Naive thymus-derived CD4-positive, alpha-beta T cell (primary cell): ENCODE measurements at regions of chr10 and their contacts with region 1.

Region 1: DNA sequence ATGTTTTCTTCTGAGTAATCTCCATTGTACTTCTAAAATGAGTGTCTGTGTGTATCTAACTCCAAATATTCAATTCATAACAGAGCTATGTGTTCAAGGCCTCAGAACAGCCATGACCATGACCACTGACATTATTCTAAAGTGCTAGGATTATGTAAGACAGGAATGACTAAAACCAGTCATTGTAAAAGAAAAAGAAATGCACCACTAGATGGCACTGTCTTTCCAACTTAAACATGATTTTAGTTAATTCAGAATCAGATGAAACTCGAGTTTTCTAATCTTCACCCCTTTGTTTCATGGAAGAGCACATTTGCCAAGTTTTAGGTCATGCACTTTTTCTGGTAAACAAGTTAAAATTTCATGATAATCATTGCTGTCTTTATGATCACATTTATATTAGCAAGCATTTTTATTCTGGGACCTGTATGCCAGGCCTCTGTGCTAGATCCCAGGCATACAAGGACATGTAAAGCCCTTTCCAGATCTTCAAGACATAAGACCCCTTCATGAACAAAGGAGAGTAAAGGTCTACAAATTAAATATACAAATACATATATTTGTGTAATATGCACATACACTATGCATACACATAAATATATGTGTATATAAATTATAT is 26.1 kb upstream of the RSU1 start:
- DNase-seq: peak in 7 of 9 donors; percentile 44 to 71 (median 63)
- ATAC-seq: peak; percentile 86
- H3K4me3 ChIP-seq: no peak overlapping the region
- H3K4me3 Mint-ChIP-seq: no peak overlapping the region
- H3K27ac ChIP-seq: no peak overlapping the region
- H3K27ac Mint-ChIP-seq: peak overlapping the region in 5 of 9 donors; percentile 18 to 43 (median 34)
- H3K4me1 ChIP-seq: no peaks in the 10 kb centered on the region
- H3K4me1 Mint-ChIP-seq: peaks cover 0 to 9% (median 3%) of the 10 kb centered on the region in 7 donors
- H3K27me3 ChIP-seq: no peaks in the 10 kb centered on the region
- H3K27me3 Mint-ChIP-seq: peaks cover 0 to 2% (median 0%) of the 10 kb centered on the region in 5 donors

Region 2: DNA sequence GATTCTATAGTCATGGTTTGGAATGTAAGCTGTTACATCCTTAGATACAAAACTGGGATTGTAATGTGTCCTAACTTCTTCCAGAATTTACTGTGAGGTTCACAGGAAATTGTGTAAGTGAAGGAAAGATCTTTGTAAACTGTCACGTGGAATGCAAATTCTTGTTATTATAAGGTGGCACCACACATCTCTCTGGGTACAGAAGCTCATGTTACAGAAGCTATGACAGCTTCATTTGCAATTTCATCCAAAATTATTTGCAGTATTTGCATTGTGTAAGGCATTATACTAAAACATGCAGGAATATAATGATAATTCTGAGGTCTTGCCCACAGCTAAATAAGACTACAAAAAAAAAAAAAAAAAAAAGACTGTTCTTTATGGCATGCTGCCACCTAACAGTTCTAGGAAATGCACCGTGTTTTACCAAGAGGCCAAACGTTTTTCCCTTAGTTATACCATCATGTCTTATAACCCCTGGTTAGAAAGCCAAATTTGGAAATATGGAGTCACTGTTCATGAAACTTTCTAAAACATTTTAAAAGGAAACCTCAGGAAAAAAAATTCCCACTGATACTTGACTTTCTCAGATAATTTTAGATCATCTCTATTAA is 1000.7 kb before region 1 on chr10:
- CTCF ChIA-PET with region 1: no interaction called
- POLR2A ChIA-PET with region 1: no interaction called
- intact Hi-C with region 1: no loop called
- DNase-seq: no peak
- ATAC-seq: no peak
- H3K4me3 ChIP-seq: no peak overlapping the region
- H3K4me3 Mint-ChIP-seq: no peak overlapping the region
- H3K27ac ChIP-seq: no peak overlapping the region
- H3K27ac Mint-ChIP-seq: peak overlapping the region in 1 of 9 donors; percentile 19
- H3K4me1 ChIP-seq: no peaks in the 10 kb centered on the region
- H3K4me1 Mint-ChIP-seq: peaks cover 11 to 34% (median 30%) of the 10 kb centered on the region in 7 donors
- H3K27me3 ChIP-seq: no peaks in the 10 kb centered on the region
- H3K27me3 Mint-ChIP-seq: no peaks in the 10 kb centered on the region

Region 3: GRCh38 chr10:15879058-15879457 is 964.3 kb before region 1 on chr10:
- CTCF ChIA-PET with region 1: no interaction called
- POLR2A ChIA-PET with region 1: no interaction called
- intact Hi-C with region 1: loop called in 1 of 2 experiments (anchors 1 kb)
- DNase-seq: peak in 5 of 9 donors; percentile 14 to 38 (median 34)
- ATAC-seq: peak; percentile 44
- H3K4me3 ChIP-seq: no peak overlapping the region
- H3K4me3 Mint-ChIP-seq: no peak overlapping the region
- H3K27ac ChIP-seq: no peak overlapping the region
- H3K27ac Mint-ChIP-seq: no peak overlapping the region
- H3K4me1 ChIP-seq: no peaks in the 10 kb centered on the region
- H3K4me1 Mint-ChIP-seq: no peaks in the 10 kb centered on the region
- H3K27me3 ChIP-seq: no peaks in the 10 kb centered on the region
- H3K27me3 Mint-ChIP-seq: peaks cover 42 to 72% (median 54%) of the 10 kb centered on the region in 5 donors

Region 4: GRCh38 chr10:16384023-16384422 is 459.3 kb before region 1 on chr10:
- CTCF ChIA-PET with region 1: no interaction called
- POLR2A ChIA-PET with region 1: no interaction called
- intact Hi-C with region 1: no loop called
- DNase-seq: no peak
- ATAC-seq: no peak
- H3K4me3 ChIP-seq: no peak overlapping the region
- H3K4me3 Mint-ChIP-seq: no peak overlapping the region
- H3K27ac ChIP-seq: no peak overlapping the region
- H3K27ac Mint-ChIP-seq: no peak overlapping the region
- H3K4me1 ChIP-seq: no peaks in the 10 kb centered on the region
- H3K4me1 Mint-ChIP-seq: no peaks in the 10 kb centered on the region
- H3K27me3 ChIP-seq: no peaks in the 10 kb centered on the region
- H3K27me3 Mint-ChIP-seq: peaks cover 0 to 5% (median 0%) of the 10 kb centered on the region in 5 donors

Region 5: GRCh38 chr10:16891375-16892313 is 48.3 kb after region 1 on chr10:
- CTCF ChIA-PET with region 1: no interaction called
- POLR2A ChIA-PET with region 1: no interaction called
- intact Hi-C with region 1: loop called in 1 of 2 experiments (anchors 5 kb)
- DNase-seq: peak in 3 of 9 donors; percentile 7 to 18 (median 15)
- ATAC-seq: peak; percentile 69
- H3K4me3 ChIP-seq: no peak overlapping the region
- H3K4me3 Mint-ChIP-seq: peak overlapping the region; percentile 35 to 81 (median 58)
- H3K27ac ChIP-seq: no peak overlapping the region
- H3K27ac Mint-ChIP-seq: peak overlapping the region in 2 of 9 donors; percentile 40 to 49
- H3K4me1 ChIP-seq: no peaks in the 10 kb centered on the region
- H3K4me1 Mint-ChIP-seq: peaks cover 5 to 9% (median 5%) of the 10 kb centered on the region in 7 donors
- H3K27me3 ChIP-seq: no peaks in the 10 kb centered on the region
- H3K27me3 Mint-ChIP-seq: peaks cover 0 to 42% (median 0%) of the 10 kb centered on the region in 5 donors

Region 6: DNA sequence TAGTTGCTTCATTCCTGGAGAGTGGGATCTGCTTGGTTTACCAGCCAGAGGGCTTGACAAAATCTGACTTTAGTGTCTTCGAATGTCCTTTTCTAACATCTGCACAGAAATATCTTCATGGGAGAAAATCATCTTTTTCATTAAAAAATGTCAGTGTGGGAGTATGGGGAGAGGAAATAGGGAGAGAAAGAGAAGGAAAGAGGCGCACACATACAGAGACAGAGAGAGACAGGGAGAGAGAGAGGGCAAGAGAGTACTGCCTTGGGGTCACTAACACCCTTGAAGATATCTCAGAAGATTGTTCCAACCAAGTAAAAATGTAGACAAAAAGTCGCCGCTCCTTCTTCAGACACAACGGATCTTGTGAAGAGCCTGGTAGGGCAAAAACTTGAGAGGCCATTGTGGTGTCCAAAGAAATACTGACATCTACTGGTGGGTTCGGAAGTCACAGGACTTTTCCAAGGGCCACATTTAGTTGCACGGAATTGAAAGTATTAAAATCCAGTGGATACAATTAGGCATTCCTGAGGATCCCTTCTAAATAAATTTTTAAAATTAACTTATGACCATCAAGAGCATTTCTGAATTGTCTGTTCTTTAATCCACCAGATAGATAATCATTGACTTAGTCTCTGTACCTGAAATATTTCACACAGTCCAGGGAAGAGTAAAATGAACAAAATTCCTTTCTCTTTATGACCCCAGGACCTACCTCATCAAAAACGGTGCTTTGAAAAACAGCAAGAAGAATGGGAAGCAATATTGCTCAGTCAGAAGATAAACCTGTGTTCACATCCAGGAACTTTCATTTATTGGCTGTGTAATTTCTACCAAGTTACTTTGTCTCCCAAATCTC is 414.3 kb after region 1 on chr10:
- CTCF ChIA-PET with region 1: interaction called, 17 read pairs
- POLR2A ChIA-PET with region 1: no interaction called
- intact Hi-C with region 1: loop called (anchors 1 kb)
- DNase-seq: peak in 8 of 9 donors; percentile 15 to 71 (median 58)
- ATAC-seq: peak; percentile 88
- H3K4me3 ChIP-seq: no peak overlapping the region
- H3K4me3 Mint-ChIP-seq: peak overlapping the region in 3 of 10 donors; percentile 39 to 55 (median 51)
- H3K27ac ChIP-seq: no peak overlapping the region
- H3K27ac Mint-ChIP-seq: peak overlapping the region in 1 of 9 donors; percentile 38
- H3K4me1 ChIP-seq: no peaks in the 10 kb centered on the region
- H3K4me1 Mint-ChIP-seq: peaks cover 5 to 13% (median 6%) of the 10 kb centered on the region in 7 donors
- H3K27me3 ChIP-seq: no peaks in the 10 kb centered on the region
- H3K27me3 Mint-ChIP-seq: no peaks in the 10 kb centered on the region

Region 7: DNA sequence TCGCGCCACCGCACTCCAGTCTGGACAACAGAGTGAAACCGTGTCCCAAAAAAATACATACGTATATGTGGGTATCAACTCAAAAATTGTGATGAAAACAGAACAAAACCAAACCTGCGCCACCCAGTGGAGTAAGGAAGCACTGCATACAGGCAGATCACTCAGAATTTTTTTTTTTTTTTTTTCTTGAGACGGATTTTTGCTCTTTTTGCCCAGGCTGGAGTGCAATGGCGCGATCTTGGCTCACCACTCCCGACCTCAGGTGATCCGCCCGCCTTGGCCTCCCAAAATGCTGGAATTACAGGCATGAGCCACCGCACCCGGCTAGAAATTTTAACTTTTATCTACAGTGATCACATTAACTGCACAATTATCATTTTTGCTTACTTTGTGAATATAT is 899.6 kb after region 1 on chr10:
- CTCF ChIA-PET with region 1: no interaction called
- POLR2A ChIA-PET with region 1: no interaction called
- intact Hi-C with region 1: loop called in 1 of 2 experiments (anchors 2 kb)
- DNase-seq: peak; percentile 19 to 66 (median 56)
- ATAC-seq: peak; percentile 75
- H3K4me3 ChIP-seq: no peak overlapping the region
- H3K4me3 Mint-ChIP-seq: no peak overlapping the region
- H3K27ac ChIP-seq: no peak overlapping the region
- H3K27ac Mint-ChIP-seq: no peak overlapping the region
- H3K4me1 ChIP-seq: no peaks in the 10 kb centered on the region
- H3K4me1 Mint-ChIP-seq: peaks cover 3 to 15% (median 5%) of the 10 kb centered on the region in 7 donors
- H3K27me3 ChIP-seq: no peaks in the 10 kb centered on the region
- H3K27me3 Mint-ChIP-seq: no peaks in the 10 kb centered on the region